ENCODE measurements at regions of chr6 and their contacts with region 1.

Region 1: DNA sequence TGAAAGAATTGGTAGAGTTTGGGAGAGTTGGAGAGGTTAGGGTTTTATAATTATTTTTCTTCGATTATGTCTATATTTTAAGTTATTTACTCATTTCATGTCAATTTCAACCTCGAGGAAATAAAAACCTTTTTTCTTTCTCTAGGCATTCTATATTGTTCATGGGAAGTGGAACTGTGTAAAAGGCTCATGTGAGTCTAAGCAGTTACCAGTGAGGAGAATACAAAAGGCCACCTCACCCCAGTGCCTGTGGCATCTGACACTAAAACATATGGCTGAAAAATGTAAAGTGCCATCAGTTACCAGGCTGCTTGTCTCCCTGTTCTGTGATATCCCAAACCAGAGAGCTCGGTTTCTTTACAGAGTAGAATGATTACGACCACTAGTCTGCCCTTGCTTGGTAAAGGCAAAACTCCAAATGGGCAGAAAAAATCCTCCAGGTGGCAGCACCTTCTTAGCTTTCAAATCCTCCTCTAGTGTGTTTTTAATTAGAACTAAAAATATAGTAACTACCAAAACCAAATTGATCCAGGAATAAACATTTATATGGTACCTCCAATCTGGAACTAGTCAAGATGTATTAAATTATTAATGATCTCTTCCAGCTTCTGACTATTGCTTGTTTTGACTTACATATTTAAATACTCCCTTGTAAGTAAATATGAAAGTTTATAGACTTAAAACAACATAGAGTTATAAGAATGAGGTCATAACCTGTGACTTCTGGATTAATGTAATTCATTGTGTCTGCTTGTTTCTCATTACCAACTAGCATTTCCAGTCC is 122.6 kb upstream of the MCHR2 start:
- DNase-seq: peak in 4 of 10 donors; percentile 11 to 57 (median 36)
- H3K4me3 ChIP-seq: no peak overlapping the region
- H3K27ac ChIP-seq: no peak overlapping the region
- H3K27me3 ChIP-seq: peaks cover 0 to 13% (median 0%) of the 10 kb centered on the region in 45 donors
- CTCF ChIP-seq: peak; percentile 63 to 96 (median 80)

Region 2: DNA sequence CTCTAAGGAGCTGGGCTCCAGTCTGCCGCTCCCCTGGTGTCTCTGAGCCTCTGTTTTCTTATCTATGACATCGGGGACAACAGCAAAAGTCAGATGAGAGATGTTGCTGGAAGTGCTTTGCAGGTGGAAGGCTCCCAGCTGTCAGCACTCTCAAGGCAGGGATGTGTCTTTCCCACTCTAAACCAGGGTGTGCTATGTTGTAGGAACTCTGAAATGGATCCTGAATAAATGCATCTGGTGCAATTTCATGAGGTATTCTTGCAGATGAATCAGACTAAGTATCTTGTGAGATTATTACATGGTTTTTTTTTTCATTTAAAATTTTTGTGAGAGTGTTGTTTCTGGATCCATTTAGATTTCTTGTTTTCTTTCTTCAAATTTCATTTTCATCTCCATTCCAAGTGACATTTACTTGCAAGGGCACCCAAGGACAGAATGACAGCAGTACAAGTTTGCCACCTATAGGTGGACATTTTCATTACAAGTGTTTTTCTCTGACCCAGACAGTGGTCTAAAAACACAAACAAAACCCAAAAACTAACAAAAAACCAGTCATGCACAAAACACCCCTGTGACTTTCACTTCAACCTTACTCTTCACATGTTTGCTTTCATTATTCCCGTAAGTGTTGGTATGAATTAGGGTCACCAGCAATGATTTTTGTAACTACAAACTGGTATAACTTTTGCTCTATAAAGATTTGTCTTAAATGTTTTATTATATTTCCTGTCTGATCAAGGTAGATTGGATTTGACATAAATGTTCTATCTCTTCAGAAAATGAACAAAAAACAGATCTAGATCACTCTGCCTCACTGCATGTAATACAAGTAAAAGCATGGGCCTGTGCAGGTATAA is 362.8 kb after region 1 on chr6:
- intact Hi-C with region 1: loop called (anchors 5 to 10 kb)
- DNase-seq: no peak
- H3K4me3 ChIP-seq: no peak overlapping the region
- H3K27ac ChIP-seq: no peak overlapping the region
- H3K27me3 ChIP-seq: peaks cover 0 to 29% (median 6%) of the 10 kb centered on the region in 45 donors
- CTCF ChIP-seq: peak; percentile 37 to 85 (median 72)